A549 (cell line): ENCODE measurements at regions of chr16 and their contacts with region 1.

Region 1: DNA sequence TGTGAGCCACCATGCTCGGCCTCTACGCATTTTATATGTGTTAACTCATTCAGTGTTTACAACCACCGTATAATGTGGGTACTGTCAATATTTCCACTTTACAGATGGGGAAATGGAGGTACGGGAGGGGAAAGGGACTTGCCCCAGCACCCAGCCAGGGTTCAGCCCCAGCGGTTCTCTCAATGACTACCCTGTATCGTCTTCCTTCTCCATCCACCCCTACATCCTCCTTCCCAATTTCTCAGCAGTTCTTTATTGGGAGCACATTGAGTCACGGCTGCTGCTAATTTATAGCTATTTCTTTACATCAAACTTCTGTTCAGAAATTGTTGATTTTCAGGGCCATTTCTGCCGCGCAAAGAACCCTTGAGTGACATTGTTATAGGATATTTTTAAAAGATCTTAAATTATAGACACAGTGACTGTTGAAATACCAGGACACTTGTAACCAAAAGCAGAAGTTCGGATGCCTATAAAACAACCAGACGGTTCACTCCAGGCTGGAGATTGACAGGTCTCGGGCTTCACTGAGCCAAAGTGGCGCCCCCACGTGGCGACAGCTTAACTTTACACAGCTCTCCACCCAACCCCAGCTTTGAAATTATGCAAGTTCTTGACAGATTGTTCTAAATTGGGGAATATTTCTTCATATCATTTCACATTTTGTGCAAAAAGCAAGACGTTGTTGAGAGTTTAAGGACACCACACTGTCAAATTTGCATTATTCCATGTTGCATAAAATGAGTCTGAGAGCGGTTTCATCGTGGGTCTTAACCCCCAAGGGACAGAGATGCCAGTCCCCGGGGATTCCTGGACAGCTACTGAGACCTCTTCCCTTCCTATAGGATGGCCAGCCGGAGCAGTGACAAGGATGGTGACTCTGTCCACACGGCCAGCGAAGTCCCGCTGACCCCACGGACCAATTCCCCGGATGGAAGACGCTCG is 11.8 kb downstream of the SYT17 start:
- DNase-seq: peak; percentile 70 to 76
- ATAC-seq: peak; percentile 70 to 90; a peak in 4 of 6 replicates
- H3K4me3 ChIP-seq: no peak overlapping the region
- H3K27ac ChIP-seq: no peak overlapping the region
- H3K4me1 ChIP-seq: peaks cover 14% of the 10 kb centered on the region
- CTCF ChIP-seq: peak; percentile 78
- EP300 ChIP-seq: no peak
- POLR2A ChIP-seq: no peak
- RAD21 ChIP-seq: peak; percentile 53 to 57; a peak in 4 of 5 replicates

Region 2: DNA sequence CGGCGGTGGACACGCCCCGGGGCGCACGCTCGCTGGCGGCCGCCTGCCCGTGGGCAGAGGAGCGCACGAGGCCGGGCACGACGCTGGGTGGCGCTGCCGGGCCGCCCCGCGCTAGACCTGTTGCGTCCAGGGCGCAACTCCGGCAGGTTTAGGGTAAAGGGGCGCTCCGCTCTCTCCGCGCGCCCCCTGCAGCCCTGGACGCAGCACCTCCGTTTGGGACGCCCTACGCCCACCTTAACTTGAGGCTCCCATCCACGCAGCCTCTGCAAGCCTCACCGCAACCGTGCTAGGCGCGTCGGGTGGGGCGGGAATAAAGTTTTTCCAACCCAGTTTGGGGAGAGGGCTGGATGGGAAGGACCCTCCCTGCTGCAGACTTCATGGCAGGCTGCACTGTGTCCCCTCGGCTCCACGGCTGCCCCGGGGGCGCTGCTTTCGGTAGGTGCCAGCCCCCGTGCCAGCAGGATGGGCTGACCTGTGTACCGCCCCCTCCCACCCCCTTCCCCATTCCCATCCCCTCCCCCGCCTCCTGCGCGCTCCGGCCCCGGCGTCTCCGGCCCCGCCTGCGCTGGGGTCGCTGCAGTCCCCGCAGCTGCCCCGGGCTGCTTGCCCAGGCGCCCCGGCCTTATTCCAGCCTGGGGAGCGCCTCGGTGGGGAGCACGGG is 12.0 kb before region 1 on chr16 and contains the start of gene SYT17:
- CTCF ChIA-PET with region 1: interaction called, 11 read pairs
- POLR2A ChIA-PET with region 1: no interaction called
- DNase-seq: peak; percentile 80 to 90
- ATAC-seq: peak; percentile 94 to 95
- H3K4me3 ChIP-seq: peak within 1 kb of the TSS; percentile 84
- H3K27ac ChIP-seq: peak within 1 kb of the TSS; percentile 91 to 96
- H3K4me1 ChIP-seq: peaks cover 26% of the 10 kb centered on the region
- CTCF ChIP-seq: peak; percentile 97
- EP300 ChIP-seq: no peak
- POLR2A ChIP-seq: peak; percentile 36; the same call in 1 of the 2 replicates
- RAD21 ChIP-seq: peak; percentile 80 to 96
- polyA plus RNA-seq, gene SYT17: 18.7 and 28.1 TPM in 2 replicates

Region 3: DNA sequence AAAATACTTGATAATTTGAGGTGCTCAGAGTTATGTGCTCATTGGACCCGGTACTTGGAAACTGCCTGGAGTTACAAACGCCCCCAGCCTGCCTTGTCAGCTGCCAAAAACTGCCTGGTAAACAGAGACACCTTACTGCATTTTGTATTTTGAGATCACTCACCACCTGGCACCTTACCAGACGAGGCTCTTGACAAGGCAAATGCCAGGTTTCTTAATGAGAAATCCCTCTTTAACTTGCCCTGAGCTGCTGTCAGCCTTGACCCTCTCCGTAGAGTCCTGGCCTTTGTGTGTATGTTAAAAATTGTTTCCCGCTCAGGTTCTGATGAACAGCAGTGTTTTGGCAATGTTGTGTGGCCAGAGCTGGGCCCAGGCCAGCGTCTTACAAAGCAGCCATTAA is 17.1 kb after region 1 on chr16:
- CTCF ChIA-PET with region 1: interaction called, 18 read pairs
- POLR2A ChIA-PET with region 1: interaction called, 3 read pairs
- DNase-seq: no peak
- ATAC-seq: no peak
- H3K4me3 ChIP-seq: no peak overlapping the region
- H3K27ac ChIP-seq: no peak overlapping the region
- H3K4me1 ChIP-seq: no peaks in the 10 kb centered on the region
- CTCF ChIP-seq: no peak
- EP300 ChIP-seq: no peak
- POLR2A ChIP-seq: no peak
- RAD21 ChIP-seq: no peak